Prostate gland (tissue), 2 donors: ENCODE measurements at regions of chr2 and their contacts with region 1.

Region 1: GRCh38 chr2:130372055-130372832 is 16.4 kb downstream of the PTPN18 start:
- DNase-seq: peak; percentile 84
- H3K4me3 ChIP-seq: peak overlapping the region; percentile 79 to 83
- H3K27ac ChIP-seq: peak overlapping the region; percentile 81 to 83
- H3K4me1 ChIP-seq: no peaks in the 10 kb centered on the region
- H3K27me3 ChIP-seq: no peaks in the 10 kb centered on the region
- CTCF ChIP-seq: peak; percentile 85 to 94 (median 90)
- POLR2A ChIP-seq: peak; percentile 46

Region 2: DNA sequence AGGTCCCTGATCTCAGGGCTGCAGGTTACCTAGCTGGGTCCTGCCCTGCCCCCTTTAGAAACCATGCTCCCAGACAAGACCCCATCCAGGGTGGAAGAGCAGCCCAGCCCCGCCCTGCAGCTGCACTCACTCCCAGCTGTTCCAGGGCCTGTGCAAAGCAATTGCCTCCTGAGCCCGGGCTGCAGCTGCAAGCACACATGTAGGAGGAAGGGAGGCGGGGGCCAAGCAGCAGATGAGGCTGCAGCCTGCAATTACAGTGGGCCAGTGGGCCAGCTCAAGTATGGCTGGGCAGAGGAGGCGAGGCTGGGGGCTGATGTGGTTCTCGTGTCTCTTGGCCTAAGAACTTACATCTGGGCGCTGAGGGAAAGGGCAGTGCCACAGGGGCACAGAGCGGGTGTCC is 108.6 kb before region 1 on chr2:
- intact Hi-C with region 1: no loop called
- DNase-seq: no peak
- H3K4me3 ChIP-seq: no peak overlapping the region
- H3K27ac ChIP-seq: no peak overlapping the region
- H3K4me1 ChIP-seq: no peaks in the 10 kb centered on the region
- H3K27me3 ChIP-seq: no peaks in the 10 kb centered on the region
- CTCF ChIP-seq: no peak
- POLR2A ChIP-seq: no peak

Region 3: DNA sequence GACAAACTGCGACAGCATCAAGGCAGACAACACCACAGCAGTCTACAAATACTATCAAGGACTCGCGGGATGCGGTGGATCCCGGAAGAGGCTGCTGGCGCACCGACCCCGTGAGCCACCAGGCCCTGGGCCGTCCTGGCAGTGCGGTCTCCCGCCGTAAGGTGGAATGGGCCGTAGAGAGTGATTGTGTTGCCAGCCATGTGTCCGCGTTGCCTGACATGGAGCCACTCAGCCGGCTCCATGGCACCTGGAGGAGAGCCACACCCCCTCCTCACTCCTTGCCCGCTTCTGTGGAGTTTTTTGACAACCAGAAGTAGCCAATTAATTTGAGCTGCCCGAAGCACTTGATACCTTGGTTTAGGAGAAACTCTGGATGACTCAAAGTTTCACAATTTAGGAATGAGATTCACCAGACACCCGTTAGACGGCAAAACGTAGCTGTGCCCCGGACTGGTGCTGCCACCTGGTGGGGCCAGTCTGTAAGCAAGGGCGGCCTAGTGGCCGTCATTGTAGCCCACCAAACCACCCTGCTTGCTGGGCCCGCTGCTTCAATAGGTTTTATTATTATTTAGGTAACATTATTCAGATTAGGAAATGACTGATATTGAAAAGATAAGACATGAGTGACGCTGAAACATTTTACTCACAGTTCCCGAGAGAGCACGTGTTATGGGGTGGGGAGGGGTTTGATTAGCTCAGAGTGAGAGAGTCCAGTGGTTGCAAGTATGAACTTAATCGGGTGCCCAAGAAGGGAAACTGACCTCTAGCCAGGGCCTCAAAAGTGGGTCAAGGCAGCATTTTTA is 39.8 kb before region 1 on chr2:
- intact Hi-C with region 1: loop called (anchors 5 kb)
- DNase-seq: peak; percentile 60
- H3K4me3 ChIP-seq: no peak overlapping the region
- H3K27ac ChIP-seq: no peak overlapping the region
- H3K4me1 ChIP-seq: no peaks in the 10 kb centered on the region
- H3K27me3 ChIP-seq: no peaks in the 10 kb centered on the region
- CTCF ChIP-seq: peak; percentile 76 to 93 (median 92)
- POLR2A ChIP-seq: no peak

Region 4: GRCh38 chr2:130391058-130391871 is 19.0 kb after region 1 on chr2:
- intact Hi-C with region 1: loop called (anchors 2 kb)
- DNase-seq: peak; percentile 81
- H3K4me3 ChIP-seq: peak overlapping the region; percentile 66 to 70
- H3K27ac ChIP-seq: peak overlapping the region; percentile 96 to 97
- H3K4me1 ChIP-seq: no peaks in the 10 kb centered on the region
- H3K27me3 ChIP-seq: no peaks in the 10 kb centered on the region
- CTCF ChIP-seq: peak in 1 of 4 experiments; percentile 25
- POLR2A ChIP-seq: peak; percentile 10